ENCODE measurements at regions of chr11 and their contacts with region 1.

Region 1: GRCh38 chr11:112961146-112961668 is at the start of gene NCAM1:
- DNase-seq: peak; percentile 78 to 89
- H3K4me3 ChIP-seq: peak within 1 kb of the TSS; percentile 36
- H3K4me3 Mint-ChIP-seq: peak within 1 kb of the TSS; percentile 74
- H3K27ac Mint-ChIP-seq: no peak within 1 kb of the TSS
- H3K4me1 ChIP-seq: 0 out of 2 replicates have a peak, but pooled peaks cover 5% of the 10 kb centered on the region
- H3K4me1 Mint-ChIP-seq: peaks cover 4% of the 10 kb centered on the region
- H3K27me3 ChIP-seq: peaks cover 2% of the 10 kb centered on the region
- H3K27me3 Mint-ChIP-seq: peaks cover 49% of the 10 kb centered on the region
- CTCF ChIP-seq: no peak
- total RNA-seq, gene NCAM1: 0.95 and 1.1 TPM in 2 replicates

Region 2: GRCh38 chr11:112280268-112281126 is 680.7 kb before region 1 on chr11:
- CTCF ChIA-PET with region 1: no interaction called
- POLR2A ChIA-PET with region 1: no interaction called
- intact Hi-C with region 1: no loop called
- DNase-seq: peak; percentile 89 to 90
- H3K4me3 ChIP-seq: peak overlapping the region; percentile 28
- H3K4me3 Mint-ChIP-seq: peak overlapping the region; percentile 75
- H3K27ac Mint-ChIP-seq: no peak overlapping the region
- H3K4me1 ChIP-seq: peaks cover 34% of the 10 kb centered on the region
- H3K4me1 Mint-ChIP-seq: peaks cover 34% of the 10 kb centered on the region
- H3K27me3 ChIP-seq: no peaks in the 10 kb centered on the region
- H3K27me3 Mint-ChIP-seq: peaks cover 3% of the 10 kb centered on the region
- CTCF ChIP-seq: peak; percentile 86 to 97

Region 3: DNA sequence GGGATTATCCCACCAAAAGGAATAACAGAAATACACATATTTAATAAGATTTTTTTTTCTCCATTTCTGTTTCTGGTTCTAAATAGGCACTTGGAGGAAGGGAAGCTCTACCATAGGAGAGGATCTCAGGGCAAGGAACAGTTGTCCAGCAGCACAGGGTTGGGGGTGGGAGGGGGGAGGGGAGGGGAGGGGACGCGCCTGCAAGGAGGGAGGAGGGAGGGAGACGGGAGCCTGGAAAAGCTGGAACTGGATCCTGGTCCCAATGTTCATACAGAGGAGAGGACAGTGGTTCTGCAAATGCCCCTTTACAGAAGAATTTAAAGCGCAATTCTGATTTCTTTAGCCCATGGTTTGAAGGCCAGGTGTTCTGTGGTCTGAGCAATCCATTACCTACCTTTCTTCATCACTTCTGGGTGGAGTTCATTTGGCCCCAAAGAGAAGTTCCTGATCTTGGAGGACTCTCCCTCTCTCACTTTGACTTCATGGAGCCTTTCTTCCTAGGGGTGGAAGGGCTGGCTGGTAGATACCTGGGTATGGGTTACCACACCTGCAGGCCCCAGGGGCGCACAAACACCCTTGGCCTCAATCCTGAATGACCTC is 348.9 kb before region 1 on chr11:
- CTCF ChIA-PET with region 1: no interaction called
- POLR2A ChIA-PET with region 1: no interaction called
- intact Hi-C with region 1: loop called (anchors 1 kb)
- DNase-seq: no peak
- H3K4me3 ChIP-seq: no peak overlapping the region
- H3K4me3 Mint-ChIP-seq: no peak overlapping the region
- H3K27ac Mint-ChIP-seq: no peak overlapping the region
- H3K4me1 ChIP-seq: no peaks in the 10 kb centered on the region
- H3K4me1 Mint-ChIP-seq: no peaks in the 10 kb centered on the region
- H3K27me3 ChIP-seq: no peaks in the 10 kb centered on the region; the same call in 1 of the 2 replicates
- H3K27me3 Mint-ChIP-seq: peaks cover 24% of the 10 kb centered on the region
- CTCF ChIP-seq: no peak

Region 4: DNA sequence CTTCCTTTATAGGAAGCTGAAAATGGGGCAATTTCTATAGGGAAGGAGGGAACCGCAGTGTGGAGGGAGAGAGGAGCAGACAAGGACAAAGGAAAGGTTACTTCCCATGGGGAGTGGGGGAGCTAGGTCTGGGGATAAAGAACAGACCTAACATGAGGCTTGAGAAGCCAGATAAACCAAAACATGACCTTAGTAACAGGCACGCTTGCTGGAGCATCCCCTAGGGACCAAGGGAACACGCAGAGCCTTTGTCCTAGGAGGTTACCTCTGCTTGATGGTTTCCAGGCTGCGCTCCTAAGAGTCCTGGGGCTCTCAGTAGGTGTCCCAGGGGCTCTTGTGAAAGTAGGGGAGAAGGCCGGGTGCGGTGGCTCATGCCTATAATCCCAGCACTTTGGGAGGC is 271.4 kb before region 1 on chr11:
- CTCF ChIA-PET with region 1: no interaction called
- POLR2A ChIA-PET with region 1: no interaction called
- intact Hi-C with region 1: no loop called
- DNase-seq: no peak
- H3K4me3 ChIP-seq: no peak overlapping the region
- H3K4me3 Mint-ChIP-seq: no peak overlapping the region
- H3K27ac Mint-ChIP-seq: no peak overlapping the region
- H3K4me1 ChIP-seq: no peaks in the 10 kb centered on the region
- H3K4me1 Mint-ChIP-seq: no peaks in the 10 kb centered on the region
- H3K27me3 ChIP-seq: peaks cover 4% of the 10 kb centered on the region; the same call in 1 of the 2 replicates
- H3K27me3 Mint-ChIP-seq: peaks cover 27% of the 10 kb centered on the region
- CTCF ChIP-seq: no peak

Region 5: DNA sequence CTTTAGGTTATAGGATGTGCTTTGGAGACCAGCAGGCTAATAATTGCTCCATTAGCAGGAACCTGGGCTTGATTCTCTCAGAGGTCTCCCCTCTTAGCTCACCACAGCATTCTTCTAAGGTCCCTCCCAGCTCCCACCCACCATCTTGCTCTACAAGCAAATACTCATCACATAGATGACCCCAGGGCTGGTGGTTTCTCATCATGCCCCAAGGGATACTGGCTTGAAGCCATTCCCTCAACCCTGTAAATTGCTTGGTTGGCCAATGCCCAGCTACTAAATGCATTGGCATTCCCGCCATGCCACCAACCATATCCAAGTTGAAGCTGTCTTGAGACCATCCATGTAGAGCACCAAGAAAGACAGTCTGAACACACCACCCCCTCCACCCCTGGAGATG is 130.2 kb before region 1 on chr11:
- CTCF ChIA-PET with region 1: no interaction called
- POLR2A ChIA-PET with region 1: interaction called, 14 read pairs
- intact Hi-C with region 1: no loop called
- DNase-seq: no peak
- H3K4me3 ChIP-seq: no peak overlapping the region
- H3K4me3 Mint-ChIP-seq: no peak overlapping the region
- H3K27ac Mint-ChIP-seq: no peak overlapping the region
- H3K4me1 ChIP-seq: no peaks in the 10 kb centered on the region
- H3K4me1 Mint-ChIP-seq: no peaks in the 10 kb centered on the region
- H3K27me3 ChIP-seq: no peaks in the 10 kb centered on the region; the same call in 1 of the 2 replicates
- H3K27me3 Mint-ChIP-seq: peaks cover 7% of the 10 kb centered on the region
- CTCF ChIP-seq: no peak